Psoas muscle (tissue), 8 donors: ENCODE measurements at regions of chr14 and their contacts with region 1.

Region 1: DNA sequence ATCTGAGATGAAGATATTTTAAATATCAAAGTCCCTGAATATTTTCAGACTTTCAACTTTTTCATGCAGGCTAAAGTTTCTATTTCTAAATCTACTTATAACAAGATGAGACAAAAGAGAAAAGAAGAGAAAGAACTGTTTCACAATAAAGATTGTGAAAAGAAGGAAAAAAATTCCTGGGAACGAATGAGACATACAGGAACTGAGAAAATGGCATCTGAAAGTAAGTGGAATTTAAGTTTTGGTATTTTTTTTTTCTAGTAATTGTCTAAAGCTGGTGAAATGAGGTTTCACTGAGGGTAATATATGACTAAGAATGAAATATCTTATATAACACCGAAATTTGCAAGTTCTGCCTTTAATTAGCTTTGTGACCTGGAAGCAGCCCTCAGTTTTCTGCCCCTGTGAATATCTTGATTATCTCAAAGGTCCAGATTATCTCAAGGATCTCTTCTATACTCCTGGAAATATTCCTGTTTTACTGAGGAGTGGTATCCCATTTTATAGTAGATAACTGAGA is 55.7 kb upstream of the PRPF39 start:
- DNase-seq: no peak
- ATAC-seq: no peak
- H3K4me3 ChIP-seq: no peak overlapping the region
- H3K27ac ChIP-seq: no peak overlapping the region
- H3K4me1 ChIP-seq: no peaks in the 10 kb centered on the region
- H3K27me3 ChIP-seq: no peaks in the 10 kb centered on the region
- CTCF ChIP-seq: no peak

Region 2: DNA sequence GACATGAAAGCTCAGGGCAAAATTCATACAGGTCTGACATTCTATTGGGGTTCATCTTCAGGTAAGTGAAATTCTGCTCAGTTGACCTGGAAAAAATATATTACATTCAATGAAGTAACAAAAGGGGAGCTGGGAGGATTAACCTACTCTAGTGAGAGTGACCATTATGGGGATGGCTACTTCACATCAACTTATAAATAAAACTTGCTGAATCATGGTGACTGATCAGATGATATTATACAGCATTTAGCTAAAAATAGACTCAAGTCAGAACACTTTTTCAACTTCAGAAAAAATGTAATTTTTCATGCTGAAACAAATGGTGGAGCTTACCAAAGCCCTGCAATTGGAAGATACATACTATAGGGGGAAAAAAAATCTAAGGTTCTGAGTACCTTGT is 1321.3 kb before region 1 on chr14:
- intact Hi-C with region 1: no loop called
- DNase-seq: no peak
- ATAC-seq: no peak
- H3K4me3 ChIP-seq: no peak overlapping the region
- H3K27ac ChIP-seq: no peak overlapping the region
- H3K4me1 ChIP-seq: no peaks in the 10 kb centered on the region
- H3K27me3 ChIP-seq: no peaks in the 10 kb centered on the region
- CTCF ChIP-seq: no peak

Region 3: GRCh38 chr14:44928793-44929192 is 99.4 kb before region 1 on chr14:
- intact Hi-C with region 1: no loop called
- DNase-seq: no peak
- ATAC-seq: no peak
- H3K4me3 ChIP-seq: no peak overlapping the region
- H3K27ac ChIP-seq: no peak overlapping the region
- H3K4me1 ChIP-seq: no peaks in the 10 kb centered on the region
- H3K27me3 ChIP-seq: no peaks in the 10 kb centered on the region
- CTCF ChIP-seq: no peak

Region 4: DNA sequence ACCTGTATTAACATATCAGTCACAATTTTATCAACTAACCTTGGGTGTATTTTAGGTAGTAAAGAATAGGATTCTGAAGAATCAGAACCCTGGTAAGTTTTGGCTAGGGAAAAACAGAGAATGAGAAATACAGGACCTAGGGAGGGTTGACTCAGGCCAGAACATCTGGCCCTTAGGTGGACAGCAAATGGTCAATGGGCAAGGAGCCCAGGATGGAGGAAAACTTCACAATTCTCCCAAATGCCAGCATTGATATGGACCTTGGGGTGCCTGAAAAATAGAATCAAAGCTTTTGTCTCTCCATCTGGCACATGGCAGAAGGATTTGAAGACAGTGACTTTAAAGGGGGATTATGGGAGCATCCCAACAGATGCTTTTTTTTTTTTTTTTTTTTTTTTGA is 23.0 kb after region 1 on chr14:
- intact Hi-C with region 1: loop called in 1 of 2 experiments (anchors 2 kb)
- DNase-seq: no peak
- ATAC-seq: no peak
- H3K4me3 ChIP-seq: no peak overlapping the region
- H3K27ac ChIP-seq: no peak overlapping the region
- H3K4me1 ChIP-seq: no peaks in the 10 kb centered on the region
- H3K27me3 ChIP-seq: no peaks in the 10 kb centered on the region
- CTCF ChIP-seq: no peak